Transverse colon (tissue), 4 donors: ENCODE measurements at regions of chr15 and their contacts with region 1.

Region 1: DNA sequence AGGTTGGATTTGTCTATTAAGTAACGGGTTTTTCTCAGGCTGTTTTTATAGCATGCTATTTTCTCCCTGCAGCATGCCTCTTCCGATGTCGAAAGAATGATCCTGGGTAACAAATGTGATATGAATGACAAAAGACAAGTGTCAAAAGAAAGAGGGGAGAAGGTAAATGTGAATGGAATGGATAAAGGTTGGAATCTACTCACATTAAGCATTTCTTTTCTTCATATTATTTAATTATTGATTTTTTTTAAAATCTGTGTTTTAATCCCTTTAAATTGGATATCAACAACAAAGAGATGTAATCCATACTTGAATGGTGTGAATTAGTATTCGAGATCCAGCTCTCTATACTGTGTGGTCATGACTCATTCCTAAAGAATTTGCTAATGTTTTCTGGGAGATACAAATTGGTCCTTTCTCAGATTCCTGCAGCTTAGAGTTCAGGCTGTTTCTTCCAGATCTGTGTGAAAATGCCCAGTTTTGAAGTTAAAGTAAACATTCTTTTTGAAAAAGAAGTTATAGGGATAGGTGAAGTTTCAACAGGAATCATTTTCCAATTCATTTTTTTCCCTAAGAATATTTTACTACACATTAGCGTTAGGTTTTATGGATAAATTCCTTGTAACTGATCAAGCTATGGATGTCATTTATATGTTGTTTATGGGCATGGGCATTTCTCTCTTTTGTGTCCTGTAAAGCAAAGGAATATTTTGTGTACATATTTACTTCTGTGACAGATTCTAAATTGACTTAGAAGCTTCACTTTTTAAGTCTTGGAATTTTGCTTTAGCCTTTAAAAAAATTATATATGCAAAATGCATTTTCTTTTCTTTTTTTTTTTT is 20.8 kb upstream of the APH1B start:
- DNase-seq: no peak
- H3K4me3 ChIP-seq: no peak overlapping the region
- H3K27ac ChIP-seq: no peak overlapping the region
- H3K4me1 ChIP-seq: no peaks in the 10 kb centered on the region
- H3K27me3 ChIP-seq: no peaks in the 10 kb centered on the region
- CTCF ChIP-seq: no peak
- EP300 ChIP-seq: no peak
- POLR2A ChIP-seq: no peak

Region 2: GRCh38 chr15:63157118-63157843 is 99.4 kb before region 1 on chr15 and contains the start of gene RPS27L:
- in situ Hi-C with region 1: loop called in 1 of 4 experiments (anchors 25 kb)
- intact Hi-C with region 1: no loop called
- DNase-seq: peak; percentile 94
- H3K4me3 ChIP-seq: peak within 1 kb of the TSS; percentile 65 to 76 (median 70)
- H3K27ac ChIP-seq: peak within 1 kb of the TSS; percentile 95 to 98 (median 96)
- H3K4me1 ChIP-seq: peaks cover 0 to 24% (median 18%) of the 10 kb centered on the region in 4 donors
- H3K27me3 ChIP-seq: no peaks in the 10 kb centered on the region
- CTCF ChIP-seq: no peak
- EP300 ChIP-seq: no peak
- POLR2A ChIP-seq: peak; percentile 97
- total RNA-seq, gene RPS27L: 4.5 to 143 (median 58.5) TPM